RWPE1 (cell line): ENCODE measurements at regions of chr10 and their contacts with region 1.

Region 1: GRCh38 chr10:113126229-113127201 is 176.5 kb downstream of the TCF7L2 start:
- DNase-seq: peak; percentile 81
- H3K27ac ChIP-seq: 0 out of 2 replicates have a peak overlapping the region, but pooled peaks have one; percentile 15
- CTCF ChIP-seq: peak; percentile 96

Region 2: GRCh38 chr10:112955582-112956421 is 170.7 kb before region 1 on chr10:
- CTCF ChIA-PET with region 1: interaction called, 10 read pairs
- POLR2A ChIA-PET with region 1: interaction called, 9 read pairs
- DNase-seq: no peak
- H3K27ac ChIP-seq: peak overlapping the region; percentile 18
- CTCF ChIP-seq: no peak

Region 3: DNA sequence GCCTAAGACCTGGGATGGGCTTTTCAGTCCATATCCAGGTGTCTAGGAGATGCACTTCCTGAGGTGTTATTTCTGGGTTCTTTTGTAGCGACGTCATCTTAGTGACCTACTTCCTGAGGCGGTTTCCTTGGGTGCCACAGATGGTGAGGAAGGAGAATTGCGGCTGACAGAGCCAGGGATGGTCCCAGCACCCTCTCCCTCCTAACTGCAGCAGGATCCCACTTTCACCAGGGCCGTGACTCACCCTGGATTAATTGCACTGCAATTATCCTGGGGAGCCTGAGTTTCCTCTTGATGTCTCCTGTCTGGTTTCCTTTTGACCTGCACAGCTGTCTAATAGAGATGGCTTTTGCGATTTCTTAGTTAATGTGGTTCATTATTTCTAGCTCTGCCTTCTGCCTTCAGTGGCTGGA is 95.2 kb after region 1 on chr10:
- CTCF ChIA-PET with region 1: no interaction called
- POLR2A ChIA-PET with region 1: no interaction called
- DNase-seq: no peak
- H3K27ac ChIP-seq: no peak overlapping the region
- CTCF ChIP-seq: no peak